ENCODE measurements at regions of chr7 and their contacts with region 1.

Region 1: GRCh38 chr7:97971990-97972943 is 17.7 kb downstream of the OCM2 start:
- H3K4me3 Mint-ChIP-seq: peak overlapping the region; percentile 80
- H3K27ac Mint-ChIP-seq: peak overlapping the region; percentile 86
- H3K4me1 Mint-ChIP-seq: peaks cover 17% of the 10 kb centered on the region
- H3K27me3 Mint-ChIP-seq: peaks cover 9% of the 10 kb centered on the region

Region 2: GRCh38 chr7:97117372-97118188 is 854.7 kb before region 1 on chr7 and contains the start of gene SDHAF3:
- intact Hi-C with region 1: loop called (anchors 5 kb)
- H3K4me3 Mint-ChIP-seq: peak within 1 kb of the TSS; percentile 92
- H3K27ac Mint-ChIP-seq: peak within 1 kb of the TSS; percentile 89
- H3K4me1 Mint-ChIP-seq: peaks cover 36% of the 10 kb centered on the region
- H3K27me3 Mint-ChIP-seq: no peaks in the 10 kb centered on the region

Measured in dendritic cell treated with granulocyte-macrophage colony-stimulating factor and Interleukin-4, amounts not matched to agents 40 ng/mL and 50 ng/mL, for 4 days (primary cell).